Endothelial cell of umbilical vein (primary cell): ENCODE measurements at regions of chr21 and their contacts with region 1.

Region 1: DNA sequence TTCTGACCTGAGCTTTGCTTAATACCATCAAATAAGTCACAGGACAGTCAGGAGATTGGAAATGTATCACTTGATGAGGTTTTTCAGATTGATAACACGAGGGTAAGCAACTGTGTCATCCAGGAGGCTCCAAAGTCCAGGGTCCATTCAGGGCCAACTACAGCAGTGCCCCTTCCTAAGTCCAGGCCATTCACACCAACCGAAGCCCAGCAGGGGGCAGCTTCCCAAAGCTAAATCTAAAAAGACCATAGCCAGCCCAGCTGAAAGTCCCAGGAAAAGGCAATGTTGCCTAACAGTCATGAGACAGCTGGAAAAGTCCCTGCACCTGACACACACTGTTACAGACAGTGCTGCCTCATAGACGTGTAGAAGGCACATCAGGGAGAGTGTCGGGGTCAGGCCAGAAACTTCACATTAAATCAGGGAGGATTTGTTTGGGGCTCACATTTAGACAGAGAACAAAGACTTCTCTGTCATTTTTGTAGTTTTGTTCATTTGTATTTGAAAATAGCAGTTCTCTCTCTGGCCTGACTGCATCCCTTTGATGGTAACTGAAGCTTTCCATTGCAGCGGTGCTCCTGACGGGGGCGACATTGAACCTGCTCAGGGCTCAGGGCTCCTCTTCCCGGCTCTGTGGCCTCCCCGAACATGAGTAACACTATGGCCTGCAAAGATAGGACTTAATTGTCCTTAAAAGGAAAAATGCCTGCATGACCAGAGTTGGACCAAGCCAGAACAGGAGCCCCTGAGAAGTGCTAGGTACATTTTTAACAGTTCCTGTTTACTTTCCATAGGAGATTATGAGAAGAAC is 200.4 kb downstream of the NRIP1 start:
- DNase-seq: peak; percentile 67
- H3K4me3 ChIP-seq: no peak overlapping the region
- H3K27ac ChIP-seq: no peak overlapping the region
- H3K4me1 ChIP-seq: peaks cover 4% of the 10 kb centered on the region
- H3K27me3 ChIP-seq: no peaks in the 10 kb centered on the region
- CTCF ChIP-seq: peak; percentile 51 to 75
- POLR2A ChIP-seq: no peak

Region 2: GRCh38 chr21:14259747-14260146 is 604.7 kb before region 1 on chr21:
- CTCF ChIA-PET with region 1: no interaction called
- POLR2A ChIA-PET with region 1: no interaction called
- dilution Hi-C with region 1: no loop called
- intact Hi-C with region 1: loop called (anchors 1 kb)
- DNase-seq: peak; percentile 56
- H3K4me3 ChIP-seq: no peak overlapping the region
- H3K27ac ChIP-seq: no peak overlapping the region
- H3K4me1 ChIP-seq: no peaks in the 10 kb centered on the region
- H3K27me3 ChIP-seq: no peaks in the 10 kb centered on the region
- CTCF ChIP-seq: peak; percentile 22 to 35
- POLR2A ChIP-seq: no peak

Region 3: GRCh38 chr21:14572204-14572780 is 292.1 kb before region 1 on chr21:
- CTCF ChIA-PET with region 1: no interaction called
- POLR2A ChIA-PET with region 1: no interaction called
- dilution Hi-C with region 1: no loop called
- intact Hi-C with region 1: no loop called
- DNase-seq: no peak
- H3K4me3 ChIP-seq: no peak overlapping the region
- H3K27ac ChIP-seq: no peak overlapping the region
- H3K4me1 ChIP-seq: no peaks in the 10 kb centered on the region
- H3K27me3 ChIP-seq: no peaks in the 10 kb centered on the region
- CTCF ChIP-seq: no peak
- POLR2A ChIP-seq: no peak

Region 4: GRCh38 chr21:14690886-14691285 is 173.5 kb before region 1 on chr21:
- CTCF ChIA-PET with region 1: no interaction called
- POLR2A ChIA-PET with region 1: no interaction called
- dilution Hi-C with region 1: no loop called
- intact Hi-C with region 1: no loop called
- DNase-seq: no peak
- H3K4me3 ChIP-seq: no peak overlapping the region
- H3K27ac ChIP-seq: no peak overlapping the region
- H3K4me1 ChIP-seq: no peaks in the 10 kb centered on the region
- H3K27me3 ChIP-seq: no peaks in the 10 kb centered on the region
- CTCF ChIP-seq: no peak
- POLR2A ChIP-seq: no peak

Region 5: GRCh38 chr21:14712121-14712723 is 152.2 kb before region 1 on chr21:
- CTCF ChIA-PET with region 1: no interaction called
- POLR2A ChIA-PET with region 1: no interaction called
- dilution Hi-C with region 1: no loop called
- intact Hi-C with region 1: no loop called
- DNase-seq: peak; percentile 78
- H3K4me3 ChIP-seq: no peak overlapping the region
- H3K27ac ChIP-seq: peak overlapping the region; percentile 100
- H3K4me1 ChIP-seq: peaks cover 22% of the 10 kb centered on the region
- H3K27me3 ChIP-seq: no peaks in the 10 kb centered on the region
- CTCF ChIP-seq: no peak
- POLR2A ChIP-seq: no peak

Region 6: DNA sequence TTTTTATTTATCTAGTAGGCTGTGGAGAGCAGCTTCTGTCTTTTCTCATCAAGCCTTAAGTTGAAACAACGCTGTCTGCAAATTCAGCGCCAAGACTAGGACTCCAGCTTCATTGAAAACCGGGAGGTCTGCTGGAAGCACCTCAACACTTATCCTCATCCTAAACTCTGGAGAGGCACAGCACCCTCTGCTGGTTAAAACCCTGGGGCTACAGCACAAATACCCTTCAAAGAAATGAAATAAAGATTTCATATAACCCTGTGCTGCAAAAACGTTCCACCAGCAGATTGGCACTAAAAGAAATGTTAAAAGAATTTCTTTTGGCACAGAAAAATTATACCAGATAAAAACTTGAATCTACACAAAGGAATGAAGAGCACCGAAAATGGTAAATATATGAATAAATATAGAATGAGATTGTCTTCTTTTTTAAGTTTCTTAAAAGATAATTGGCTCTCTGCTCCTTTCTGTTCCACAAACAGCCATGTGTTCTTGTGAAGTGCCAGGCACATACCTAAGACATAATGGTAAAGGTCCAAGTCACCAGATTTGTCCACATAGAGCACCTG is 90.6 kb before region 1 on chr21:
- CTCF ChIA-PET with region 1: no interaction called
- POLR2A ChIA-PET with region 1: no interaction called
- dilution Hi-C with region 1: no loop called
- intact Hi-C with region 1: loop called (anchors 1 kb)
- DNase-seq: peak; percentile 53
- H3K4me3 ChIP-seq: no peak overlapping the region
- H3K27ac ChIP-seq: no peak overlapping the region
- H3K4me1 ChIP-seq: no peaks in the 10 kb centered on the region
- H3K27me3 ChIP-seq: no peaks in the 10 kb centered on the region
- CTCF ChIP-seq: peak; percentile 61 to 65
- POLR2A ChIP-seq: no peak

Region 7: GRCh38 chr21:14814991-14815390 is 49.4 kb before region 1 on chr21:
- CTCF ChIA-PET with region 1: no interaction called
- POLR2A ChIA-PET with region 1: no interaction called
- dilution Hi-C with region 1: no loop called
- intact Hi-C with region 1: no loop called
- DNase-seq: no peak
- H3K4me3 ChIP-seq: no peak overlapping the region
- H3K27ac ChIP-seq: no peak overlapping the region
- H3K4me1 ChIP-seq: no peaks in the 10 kb centered on the region
- H3K27me3 ChIP-seq: no peaks in the 10 kb centered on the region
- CTCF ChIP-seq: no peak
- POLR2A ChIP-seq: no peak

Region 8: GRCh38 chr21:14956807-14957206 is 92.4 kb after region 1 on chr21:
- CTCF ChIA-PET with region 1: interaction called, 3 read pairs
- POLR2A ChIA-PET with region 1: no interaction called
- dilution Hi-C with region 1: no loop called
- intact Hi-C with region 1: loop called (anchors 10 kb)
- DNase-seq: peak; percentile 15
- H3K4me3 ChIP-seq: no peak overlapping the region
- H3K27ac ChIP-seq: no peak overlapping the region
- H3K4me1 ChIP-seq: peaks cover 3% of the 10 kb centered on the region
- H3K27me3 ChIP-seq: no peaks in the 10 kb centered on the region
- CTCF ChIP-seq: no peak
- POLR2A ChIP-seq: no peak

Region 9: GRCh38 chr21:15483138-15483780 is 618.8 kb after region 1 on chr21:
- CTCF ChIA-PET with region 1: interaction called, 60 read pairs
- POLR2A ChIA-PET with region 1: no interaction called
- dilution Hi-C with region 1: no loop called
- intact Hi-C with region 1: loop called (anchors 1 kb)
- DNase-seq: peak; percentile 84
- H3K4me3 ChIP-seq: no peak overlapping the region
- H3K27ac ChIP-seq: no peak overlapping the region
- H3K4me1 ChIP-seq: no peaks in the 10 kb centered on the region
- H3K27me3 ChIP-seq: peaks cover 1 to 6% of the 10 kb centered on the region in 2 experiments
- CTCF ChIP-seq: peak; percentile 88 to 89
- POLR2A ChIP-seq: no peak

Region 10: GRCh38 chr21:15826147-15826780 is 961.8 kb after region 1 on chr21:
- CTCF ChIA-PET with region 1: no interaction called
- POLR2A ChIA-PET with region 1: no interaction called
- dilution Hi-C with region 1: no loop called
- intact Hi-C with region 1: loop called (anchors 5 kb)
- DNase-seq: peak; percentile 74
- H3K4me3 ChIP-seq: no peak overlapping the region
- H3K27ac ChIP-seq: no peak overlapping the region
- H3K4me1 ChIP-seq: peaks cover 7% of the 10 kb centered on the region
- H3K27me3 ChIP-seq: no peaks in the 10 kb centered on the region
- CTCF ChIP-seq: peak; percentile 36 to 40
- POLR2A ChIP-seq: no peak